ENCODE measurements at regions of chr2 and their contacts with region 1.

Region 1: GRCh38 chr2:159968279-159968900 is 94.0 kb downstream of the PLA2R1 start:
- DNase-seq: peak; percentile 76
- H3K4me3 ChIP-seq: no peak overlapping the region
- H3K27ac ChIP-seq: no peak overlapping the region
- H3K4me1 ChIP-seq: peaks cover 2% of the 10 kb centered on the region
- H3K27me3 ChIP-seq: no peaks in the 10 kb centered on the region
- CTCF ChIP-seq: peak; percentile 55 to 57
- POLR2A ChIP-seq: no peak

Region 2: GRCh38 chr2:159615140-159615951 is 353.0 kb before region 1 on chr2:
- CTCF ChIA-PET with region 1: interaction called, 4 read pairs
- POLR2A ChIA-PET with region 1: no interaction called
- dilution Hi-C with region 1: no loop called
- intact Hi-C with region 1: loop called (anchors 10 kb)
- DNase-seq: peak; percentile 96
- H3K4me3 ChIP-seq: peak overlapping the region; percentile 49 to 100 (median 100)
- H3K27ac ChIP-seq: peak overlapping the region; percentile 100
- H3K4me1 ChIP-seq: peaks cover 30% of the 10 kb centered on the region
- H3K27me3 ChIP-seq: no peaks in the 10 kb centered on the region
- CTCF ChIP-seq: no peak
- POLR2A ChIP-seq: peak; percentile 82

Region 3: GRCh38 chr2:159658881-159659873 is 309.2 kb before region 1 on chr2:
- CTCF ChIA-PET with region 1: no interaction called
- POLR2A ChIA-PET with region 1: no interaction called
- dilution Hi-C with region 1: no loop called
- intact Hi-C with region 1: no loop called
- DNase-seq: no peak
- H3K4me3 ChIP-seq: no peak overlapping the region
- H3K27ac ChIP-seq: no peak overlapping the region
- H3K4me1 ChIP-seq: no peaks in the 10 kb centered on the region
- H3K27me3 ChIP-seq: no peaks in the 10 kb centered on the region
- CTCF ChIP-seq: no peak
- POLR2A ChIP-seq: no peak

Region 4: DNA sequence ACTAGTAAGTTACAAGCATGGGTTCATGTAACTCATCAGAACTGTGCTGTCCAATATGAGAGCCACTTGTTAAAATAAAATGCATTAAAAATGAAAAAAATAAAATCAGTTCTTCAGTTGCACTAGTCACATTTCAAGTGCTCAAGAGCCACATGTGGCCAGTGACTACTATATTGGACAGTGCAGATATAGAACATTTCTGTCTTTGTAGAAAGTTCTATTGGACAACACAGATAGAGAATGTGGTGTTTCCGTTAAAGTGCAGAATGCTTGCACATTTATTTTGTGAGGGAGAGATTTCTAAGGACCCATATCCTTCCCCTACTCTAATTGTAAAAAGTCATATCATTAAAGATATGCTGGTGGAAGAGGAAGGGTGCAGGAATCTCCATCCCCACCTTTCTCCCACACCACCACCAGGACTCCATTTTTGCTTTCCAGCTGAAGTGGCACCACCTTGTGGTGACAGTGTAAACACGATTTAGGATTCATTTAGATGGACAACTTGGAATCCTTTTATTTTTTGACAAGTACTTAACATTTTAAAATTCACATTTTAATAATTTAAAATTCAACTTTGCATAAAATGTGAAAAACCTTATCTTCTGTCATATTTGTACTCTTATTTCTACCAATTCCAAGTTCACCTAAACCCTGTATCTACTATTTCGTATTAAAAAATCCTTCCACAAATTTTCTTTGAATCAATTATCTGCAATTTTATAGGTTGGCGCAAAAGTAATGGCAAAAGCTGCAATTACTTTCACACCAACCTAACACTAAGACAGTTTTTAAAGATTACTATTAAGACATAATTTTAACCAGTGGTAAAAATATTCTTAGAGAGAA is 161.0 kb before region 1 on chr2:
- CTCF ChIA-PET with region 1: interaction called, 36 read pairs
- POLR2A ChIA-PET with region 1: no interaction called
- dilution Hi-C with region 1: no loop called
- intact Hi-C with region 1: loop called (anchors 1 kb)
- DNase-seq: peak; percentile 69
- H3K4me3 ChIP-seq: no peak overlapping the region
- H3K27ac ChIP-seq: no peak overlapping the region
- H3K4me1 ChIP-seq: no peaks in the 10 kb centered on the region
- H3K27me3 ChIP-seq: no peaks in the 10 kb centered on the region
- CTCF ChIP-seq: peak; percentile 62 to 67
- POLR2A ChIP-seq: no peak

Region 5: GRCh38 chr2:159855557-159856061 is 112.8 kb before region 1 on chr2:
- CTCF ChIA-PET with region 1: no interaction called
- POLR2A ChIA-PET with region 1: no interaction called
- dilution Hi-C with region 1: no loop called
- intact Hi-C with region 1: no loop called
- DNase-seq: peak; percentile 15
- H3K4me3 ChIP-seq: no peak overlapping the region
- H3K27ac ChIP-seq: no peak overlapping the region
- H3K4me1 ChIP-seq: no peaks in the 10 kb centered on the region
- H3K27me3 ChIP-seq: no peaks in the 10 kb centered on the region
- CTCF ChIP-seq: no peak
- POLR2A ChIP-seq: no peak

Region 6: DNA sequence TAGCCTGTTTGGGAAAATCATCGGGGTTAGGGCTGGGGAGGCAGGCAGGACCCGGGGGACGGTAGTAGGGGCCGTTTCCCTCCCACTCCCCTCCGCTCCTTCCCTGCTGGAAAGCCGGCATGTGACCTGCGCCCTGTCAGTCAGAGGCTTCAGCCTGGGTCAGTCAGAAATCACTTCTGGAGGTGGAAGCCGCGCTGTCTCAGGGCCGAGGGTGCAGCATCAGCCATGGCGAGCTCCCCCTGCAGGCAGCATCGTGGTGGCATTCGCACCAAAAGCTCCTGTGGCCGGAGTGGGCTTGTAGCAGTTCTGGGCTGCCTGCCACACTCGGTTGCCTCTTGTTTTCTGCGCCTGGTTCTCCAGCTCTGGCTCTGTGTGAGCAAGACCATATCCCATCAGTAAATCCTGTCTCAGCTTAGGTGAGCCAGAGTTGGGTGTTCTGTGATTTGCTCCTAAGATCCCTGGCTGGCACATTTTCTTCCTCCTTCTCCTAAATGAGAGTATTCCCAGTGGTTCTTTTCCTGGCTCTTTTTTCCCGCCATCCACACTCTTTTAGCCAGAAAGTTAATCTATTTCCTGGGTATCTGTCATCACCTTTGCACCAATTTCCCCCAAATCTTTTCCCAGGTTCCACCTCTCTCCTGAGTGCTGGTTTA is 46.5 kb before region 1 on chr2:
- CTCF ChIA-PET with region 1: interaction called, 22 read pairs
- POLR2A ChIA-PET with region 1: no interaction called
- dilution Hi-C with region 1: no loop called
- intact Hi-C with region 1: no loop called
- DNase-seq: peak; percentile 77
- H3K4me3 ChIP-seq: no peak overlapping the region
- H3K27ac ChIP-seq: no peak overlapping the region
- H3K4me1 ChIP-seq: no peaks in the 10 kb centered on the region
- H3K27me3 ChIP-seq: no peaks in the 10 kb centered on the region
- CTCF ChIP-seq: peak; percentile 89 to 97
- POLR2A ChIP-seq: no peak

Region 7: DNA sequence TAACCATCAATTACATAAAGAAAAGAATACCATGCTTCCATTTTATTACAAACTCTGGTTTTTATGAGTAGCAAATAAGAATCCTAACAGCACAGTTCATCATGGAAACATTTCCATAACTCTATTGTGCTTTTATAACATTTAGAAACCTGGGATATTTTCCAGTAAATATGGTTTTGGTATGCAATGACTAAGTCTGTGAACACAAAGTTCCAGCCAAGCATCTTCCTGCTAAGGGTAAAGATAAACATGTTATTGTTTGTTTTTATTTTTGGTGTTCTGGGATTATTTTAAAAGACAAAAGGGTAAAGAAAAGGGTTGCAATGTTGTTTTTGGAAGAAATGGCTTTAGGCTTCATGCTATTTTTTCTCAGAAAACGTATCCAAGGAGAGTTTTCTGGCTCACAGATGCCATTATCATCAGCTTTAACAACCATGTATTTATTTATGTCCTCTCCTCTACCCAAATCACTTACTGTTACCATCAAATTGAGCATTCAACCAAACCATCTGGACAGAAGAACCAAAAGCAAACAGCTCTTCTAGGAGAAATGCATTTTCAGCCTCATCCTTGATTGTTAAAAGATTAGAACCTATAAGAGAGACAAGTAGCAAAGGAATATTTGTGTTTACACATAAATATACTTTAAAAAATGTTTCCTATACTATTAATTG is 21.9 kb before region 1 on chr2:
- CTCF ChIA-PET with region 1: interaction called, 16 read pairs
- POLR2A ChIA-PET with region 1: no interaction called
- dilution Hi-C with region 1: no loop called
- intact Hi-C with region 1: no loop called
- DNase-seq: peak; percentile 94
- H3K4me3 ChIP-seq: peak overlapping the region in 1 of 3 experiments; percentile 8
- H3K27ac ChIP-seq: peak overlapping the region; percentile 98
- H3K4me1 ChIP-seq: peaks cover 41% of the 10 kb centered on the region
- H3K27me3 ChIP-seq: no peaks in the 10 kb centered on the region
- CTCF ChIP-seq: no peak
- POLR2A ChIP-seq: peak; percentile 51

Region 8: GRCh38 chr2:160901613-160902012 is 933.2 kb after region 1 on chr2:
- CTCF ChIA-PET with region 1: no interaction called
- POLR2A ChIA-PET with region 1: no interaction called
- dilution Hi-C with region 1: no loop called
- intact Hi-C with region 1: no loop called
- DNase-seq: no peak
- H3K4me3 ChIP-seq: no peak overlapping the region
- H3K27ac ChIP-seq: no peak overlapping the region
- H3K4me1 ChIP-seq: no peaks in the 10 kb centered on the region
- H3K27me3 ChIP-seq: no peaks in the 10 kb centered on the region
- CTCF ChIP-seq: no peak
- POLR2A ChIP-seq: no peak

Measured in endothelial cell of umbilical vein (primary cell).